B cell (primary cell): ENCODE measurements at regions of chr17 and their contacts with region 1.

Region 1: DNA sequence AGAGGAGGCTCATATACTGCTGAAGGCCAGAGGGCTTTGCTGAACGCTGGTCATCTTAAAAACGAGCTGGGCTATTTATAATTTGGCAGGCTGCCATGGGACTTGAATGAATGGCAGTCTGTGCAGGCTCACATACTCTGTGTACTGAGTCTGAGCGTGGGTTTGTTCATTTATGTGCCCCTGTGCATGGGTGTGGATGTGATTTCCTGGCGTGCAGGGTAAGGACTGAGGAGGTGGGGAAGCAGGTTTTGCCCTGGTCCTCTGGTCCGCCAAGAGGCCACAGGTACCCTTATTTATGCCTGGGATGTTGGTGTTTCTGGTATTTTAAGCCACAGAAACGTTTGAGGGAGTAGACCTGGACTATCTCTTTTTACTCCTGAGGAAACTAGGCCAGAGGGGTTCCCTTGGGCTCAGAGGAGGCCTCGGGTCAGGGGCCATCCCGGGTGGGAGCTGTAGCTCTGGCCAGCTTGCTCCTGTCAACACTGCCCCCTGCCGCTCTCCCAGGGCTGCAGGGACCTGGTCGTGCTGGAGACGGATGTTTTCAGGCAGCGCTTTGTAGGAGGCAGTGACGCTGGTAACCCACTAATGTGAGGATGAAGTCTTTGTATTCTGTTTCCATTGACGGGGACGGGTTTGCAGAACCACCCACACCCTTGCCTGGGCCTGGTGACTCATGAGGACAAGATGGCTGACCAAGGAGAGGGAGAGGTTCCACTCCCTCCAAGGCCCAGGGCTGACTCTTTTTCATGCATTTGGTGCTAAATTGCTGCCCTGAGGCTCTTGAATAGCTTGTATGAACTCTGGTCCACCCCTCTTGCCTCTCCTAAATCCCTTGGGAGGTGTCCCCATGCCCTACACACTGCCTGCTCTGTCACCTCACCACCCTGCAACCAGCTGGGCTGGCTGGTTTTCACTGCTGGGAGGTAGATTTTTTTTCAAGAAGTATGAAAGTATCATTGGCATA is 184.5 kb downstream of the MSI2 start:
- DNase-seq: peak; percentile 36
- ATAC-seq: peak; percentile 73
- H3K4me3 ChIP-seq: no peak overlapping the region
- H3K4me3 Mint-ChIP-seq: peak overlapping the region; percentile 40
- H3K27ac ChIP-seq: no peak overlapping the region
- H3K27ac Mint-ChIP-seq: peak overlapping the region; percentile 82
- H3K4me1 ChIP-seq: peaks cover 66 to 69% of the 10 kb centered on the region in 2 donors
- H3K4me1 Mint-ChIP-seq: peaks cover 89% of the 10 kb centered on the region
- H3K27me3 ChIP-seq: no peaks in the 10 kb centered on the region
- H3K27me3 Mint-ChIP-seq: no peaks in the 10 kb centered on the region
- CTCF ChIP-seq: peak; percentile 13

Region 2: GRCh38 chr17:57486873-57487301 is 46.1 kb after region 1 on chr17:
- CTCF ChIA-PET with region 1: no interaction called
- POLR2A ChIA-PET with region 1: no interaction called
- intact Hi-C with region 1: no loop called
- DNase-seq: peak; percentile 46
- ATAC-seq: no peak
- H3K4me3 ChIP-seq: no peak overlapping the region
- H3K4me3 Mint-ChIP-seq: peak overlapping the region; percentile 30
- H3K27ac ChIP-seq: no peak overlapping the region
- H3K27ac Mint-ChIP-seq: no peak overlapping the region
- H3K4me1 ChIP-seq: peaks cover 26 to 32% of the 10 kb centered on the region in 2 donors
- H3K4me1 Mint-ChIP-seq: peaks cover 54% of the 10 kb centered on the region
- H3K27me3 ChIP-seq: no peaks in the 10 kb centered on the region
- H3K27me3 Mint-ChIP-seq: no peaks in the 10 kb centered on the region
- CTCF ChIP-seq: no peak

Region 3: DNA sequence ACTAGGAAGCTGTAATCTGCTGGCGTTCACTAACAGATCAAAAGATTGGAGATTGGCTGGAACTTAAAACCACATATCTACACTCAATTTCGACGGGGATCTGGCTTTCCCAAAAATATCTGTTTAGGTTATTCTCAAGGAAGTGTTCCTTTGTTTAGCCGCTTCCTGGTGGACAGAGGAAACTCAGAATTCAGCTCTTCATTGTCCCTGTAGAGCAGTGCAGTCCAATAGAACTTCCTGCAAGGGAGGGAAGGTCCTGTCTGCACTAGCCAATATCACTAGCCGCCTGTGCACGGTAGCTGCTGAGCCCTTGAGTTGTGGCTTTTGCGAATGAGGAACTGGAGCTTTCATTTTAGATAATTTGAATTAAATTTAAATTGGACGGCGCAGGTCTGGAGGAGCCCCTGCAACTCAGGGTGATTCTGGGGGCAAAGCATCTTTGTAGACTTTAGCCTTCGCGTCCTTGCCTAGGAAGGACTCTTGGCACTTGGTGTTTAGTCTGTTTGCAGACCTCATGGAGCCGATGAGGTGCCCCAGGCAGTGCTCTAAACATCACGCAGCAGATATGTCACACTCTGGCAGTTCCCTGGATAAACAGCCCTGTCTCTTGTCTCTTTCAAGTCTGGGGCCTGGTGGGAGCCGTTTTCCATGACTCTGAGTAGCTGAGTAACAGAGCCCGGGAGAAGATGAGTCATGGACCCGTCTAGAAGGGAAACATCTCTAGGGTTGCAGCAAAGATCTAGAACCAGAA is 182.1 kb after region 1 on chr17:
- CTCF ChIA-PET with region 1: no interaction called
- POLR2A ChIA-PET with region 1: no interaction called
- intact Hi-C with region 1: loop called (anchors 5 kb)
- DNase-seq: peak; percentile 73
- ATAC-seq: peak; percentile 78
- H3K4me3 ChIP-seq: peak overlapping the region in 4 of 5 experiments; percentile 32 to 64 (median 49)
- H3K4me3 Mint-ChIP-seq: peak overlapping the region; percentile 81
- H3K27ac ChIP-seq: peak overlapping the region; percentile 59 to 73
- H3K27ac Mint-ChIP-seq: peak overlapping the region; percentile 85
- H3K4me1 ChIP-seq: peaks cover 34 to 42% of the 10 kb centered on the region in 2 donors
- H3K4me1 Mint-ChIP-seq: peaks cover 45% of the 10 kb centered on the region
- H3K27me3 ChIP-seq: no peaks in the 10 kb centered on the region
- H3K27me3 Mint-ChIP-seq: no peaks in the 10 kb centered on the region
- CTCF ChIP-seq: no peak